OCI-LY7 (cell line): ENCODE measurements at regions of chr15 and their contacts with region 1.

Region 1: DNA sequence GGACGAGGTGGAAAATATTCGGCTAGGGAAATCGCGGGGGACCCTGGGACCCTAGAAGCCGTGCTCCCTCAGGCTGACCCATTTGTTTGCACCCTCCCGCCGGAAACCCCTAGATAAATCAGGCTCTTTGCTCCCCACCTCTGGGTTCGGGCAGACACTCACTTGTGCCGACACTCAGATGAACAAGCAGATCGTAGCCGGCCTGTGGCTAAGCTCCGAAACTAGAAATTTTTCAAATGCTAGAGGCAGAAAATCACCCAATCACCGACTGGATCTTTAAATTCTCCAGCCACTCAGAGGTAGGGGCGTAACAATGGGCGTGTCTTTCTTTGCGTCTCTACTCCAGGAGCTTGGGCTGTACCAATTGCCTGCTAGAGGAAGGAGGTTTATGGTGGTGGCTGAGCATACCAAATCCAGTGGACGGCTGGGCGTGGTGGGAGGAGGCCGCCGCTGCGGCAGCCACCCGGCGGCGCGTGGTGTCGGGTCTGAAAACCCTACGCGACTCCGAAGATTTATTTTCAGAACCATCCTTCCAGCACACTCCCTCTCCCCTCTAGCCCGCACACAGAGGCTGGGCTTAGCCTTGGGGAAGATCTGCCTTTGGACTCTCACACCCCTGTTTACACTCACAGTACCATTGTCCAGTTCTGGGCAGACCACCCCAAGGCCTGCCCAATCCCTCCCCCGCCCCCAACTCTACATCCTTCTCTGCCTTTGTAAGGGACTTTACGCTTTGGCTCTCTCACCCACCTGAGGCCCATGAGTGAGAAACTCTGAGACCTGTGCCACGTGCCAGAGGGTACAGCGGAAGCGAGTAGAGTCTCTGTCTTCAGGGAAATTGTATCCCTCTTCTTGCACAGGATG is at the start of gene PIF1:
- DNase-seq: peak; percentile 100
- H3K4me3 ChIP-seq: peak within 1 kb of the TSS; percentile 95
- H3K27ac ChIP-seq: peak within 1 kb of the TSS; percentile 87
- H3K4me1 ChIP-seq: peaks cover 35% of the 10 kb centered on the region
- CTCF ChIP-seq: 0 out of 2 replicates have a peak, but pooled peaks have one; percentile 10
- total RNA-seq, gene PIF1: 78.0 and 82.9 TPM in 2 replicates

Region 2: GRCh38 chr15:64836023-64836536 is 10.4 kb after region 1 on chr15:
- CTCF ChIA-PET with region 1: no interaction called
- POLR2A ChIA-PET with region 1: interaction called, 7 read pairs
- intact Hi-C with region 1: loop called (anchors 1 kb)
- DNase-seq: no peak
- H3K4me3 ChIP-seq: no peak overlapping the region
- H3K27ac ChIP-seq: peak overlapping the region; percentile 11
- H3K4me1 ChIP-seq: peaks cover 36% of the 10 kb centered on the region
- CTCF ChIP-seq: no peak; the same call in 1 of the 2 replicates

Region 3: GRCh38 chr15:64841258-64842095 is 15.8 kb after region 1 on chr15 and contains the start of gene PLEKHO2:
- CTCF ChIA-PET with region 1: no interaction called
- POLR2A ChIA-PET with region 1: interaction called, 7 read pairs
- intact Hi-C with region 1: loop called (anchors 2 kb)
- DNase-seq: peak; percentile 94
- H3K4me3 ChIP-seq: peak within 1 kb of the TSS; percentile 92
- H3K27ac ChIP-seq: peak within 1 kb of the TSS; percentile 56
- H3K4me1 ChIP-seq: peaks cover 64% of the 10 kb centered on the region
- CTCF ChIP-seq: peak; percentile 59
- total RNA-seq, gene PLEKHO2: 10.1 and 12.0 TPM in 2 replicates

Region 4: DNA sequence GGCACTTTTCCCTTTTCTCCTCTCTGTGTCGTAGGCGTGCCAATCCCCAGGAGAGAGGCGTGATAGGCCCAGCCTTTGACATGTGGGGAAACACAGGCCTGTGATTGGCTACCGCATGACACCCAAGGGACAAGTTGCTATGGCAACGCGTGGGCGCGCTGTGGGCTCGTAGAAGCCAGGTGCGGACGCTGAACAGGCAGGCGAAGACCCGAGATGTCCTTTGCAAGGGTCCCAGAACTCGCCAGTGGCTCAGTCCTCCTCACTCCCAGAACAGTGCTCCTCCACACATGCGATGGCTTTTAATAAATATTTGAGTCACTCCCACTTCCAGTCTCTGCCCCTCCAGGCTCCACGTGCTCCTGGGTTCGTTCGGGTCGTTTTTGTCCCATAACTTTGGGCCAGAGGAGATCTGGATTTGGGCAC is 223.8 kb after region 1 on chr15:
- CTCF ChIA-PET with region 1: no interaction called
- POLR2A ChIA-PET with region 1: no interaction called
- intact Hi-C with region 1: no loop called
- DNase-seq: peak; percentile 90
- H3K4me3 ChIP-seq: peak overlapping the region; percentile 37
- H3K27ac ChIP-seq: no peak overlapping the region
- H3K4me1 ChIP-seq: peaks cover 19% of the 10 kb centered on the region
- CTCF ChIP-seq: no peak